Left cardiac atrium (tissue), 4 donors: ENCODE measurements at regions of chr17 and their contacts with region 1.

Region 1: DNA sequence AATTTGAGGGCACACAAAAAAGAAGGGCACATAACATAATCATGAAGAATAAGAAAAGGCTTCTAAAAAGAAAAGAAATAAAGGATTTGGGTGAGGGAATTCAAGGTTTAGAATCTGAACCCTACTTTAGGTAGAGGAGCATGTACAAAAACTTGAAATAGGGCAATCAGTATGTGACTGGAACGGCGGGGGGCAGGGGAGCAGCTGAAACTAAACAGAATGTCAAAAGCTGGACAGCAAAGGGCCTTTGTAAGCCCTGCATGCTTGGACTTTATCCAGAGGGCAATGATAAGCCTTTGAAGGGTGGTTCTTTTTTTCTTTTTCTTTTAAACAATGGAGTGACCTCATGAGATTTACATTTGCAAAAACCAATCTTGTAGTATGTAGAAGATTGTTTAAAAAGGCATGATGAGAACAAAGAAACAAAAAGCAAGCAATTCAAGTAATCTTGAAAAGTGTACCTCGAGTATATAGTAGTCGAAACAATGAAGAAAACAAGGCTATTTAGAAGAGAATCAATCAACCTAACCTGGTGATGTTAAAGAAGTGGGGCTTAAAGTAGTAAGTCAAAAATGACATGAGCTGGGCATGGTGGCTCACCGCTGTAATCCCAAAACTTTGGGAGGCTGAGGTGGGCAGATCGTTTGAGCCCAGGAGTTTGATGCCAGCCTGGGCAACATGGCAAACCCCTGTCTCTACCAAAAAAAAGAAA is 46.7 kb upstream of the ANKFY1 start:
- DNase-seq: peak; percentile 31
- ATAC-seq: peak; percentile 65 to 68

Region 2: GRCh38 chr17:4362141-4362540 is 51.6 kb after region 1 on chr17:
- intact Hi-C with region 1: loop called in 1 of 2 experiments (anchors 5 kb)
- DNase-seq: no peak
- ATAC-seq: no peak